ENCODE measurements at regions of chr7 and their contacts with region 1.

Region 1: DNA sequence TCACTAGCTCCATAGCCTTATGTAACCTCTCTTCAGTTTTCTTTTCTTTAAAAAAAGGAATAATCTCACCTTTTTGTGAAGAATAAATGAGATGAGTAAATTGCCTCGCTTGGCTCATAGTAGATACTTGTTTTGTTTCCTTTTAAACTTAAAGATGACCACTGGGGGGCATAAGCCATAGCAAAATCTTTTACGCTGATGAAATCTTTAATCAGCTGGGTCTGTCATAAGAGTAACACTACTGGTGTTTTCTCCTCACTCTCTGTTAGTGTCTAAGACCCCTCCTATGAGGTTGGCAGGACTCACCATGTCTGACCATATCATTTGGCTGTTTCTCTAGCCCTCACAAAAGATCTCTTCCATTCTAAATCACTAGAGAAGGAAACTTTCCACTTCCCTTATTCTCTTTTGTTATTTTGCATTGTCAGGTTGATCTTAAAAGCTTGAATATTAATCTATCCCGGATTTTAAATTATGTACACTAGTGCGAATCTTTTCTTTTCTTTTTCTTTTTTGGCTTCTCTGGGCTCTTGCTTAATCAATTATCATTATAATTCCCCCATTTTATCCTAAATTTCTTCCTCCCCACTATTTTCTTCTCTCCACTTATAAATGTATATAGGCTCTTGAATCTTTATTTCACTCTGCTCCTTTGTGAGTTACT is 12.5 kb downstream of the STAG3 start:
- DNase-seq: peak; percentile 42
- ATAC-seq: peak; percentile 80
- H3K4me3 ChIP-seq: no peak overlapping the region
- H3K27ac ChIP-seq: no peak overlapping the region
- H3K4me1 ChIP-seq: peaks cover 0 to 4% of the 10 kb centered on the region in 2 experiments; a peak in 2 of 4 replicates
- H3K27me3 ChIP-seq: no peaks in the 10 kb centered on the region
- CTCF ChIP-seq: peak; percentile 50 to 81 (median 64); a peak in 5 of 6 replicates
- POLR2A ChIP-seq: no peak
- RAD21 ChIP-seq: peak; percentile 62

Region 2: DNA sequence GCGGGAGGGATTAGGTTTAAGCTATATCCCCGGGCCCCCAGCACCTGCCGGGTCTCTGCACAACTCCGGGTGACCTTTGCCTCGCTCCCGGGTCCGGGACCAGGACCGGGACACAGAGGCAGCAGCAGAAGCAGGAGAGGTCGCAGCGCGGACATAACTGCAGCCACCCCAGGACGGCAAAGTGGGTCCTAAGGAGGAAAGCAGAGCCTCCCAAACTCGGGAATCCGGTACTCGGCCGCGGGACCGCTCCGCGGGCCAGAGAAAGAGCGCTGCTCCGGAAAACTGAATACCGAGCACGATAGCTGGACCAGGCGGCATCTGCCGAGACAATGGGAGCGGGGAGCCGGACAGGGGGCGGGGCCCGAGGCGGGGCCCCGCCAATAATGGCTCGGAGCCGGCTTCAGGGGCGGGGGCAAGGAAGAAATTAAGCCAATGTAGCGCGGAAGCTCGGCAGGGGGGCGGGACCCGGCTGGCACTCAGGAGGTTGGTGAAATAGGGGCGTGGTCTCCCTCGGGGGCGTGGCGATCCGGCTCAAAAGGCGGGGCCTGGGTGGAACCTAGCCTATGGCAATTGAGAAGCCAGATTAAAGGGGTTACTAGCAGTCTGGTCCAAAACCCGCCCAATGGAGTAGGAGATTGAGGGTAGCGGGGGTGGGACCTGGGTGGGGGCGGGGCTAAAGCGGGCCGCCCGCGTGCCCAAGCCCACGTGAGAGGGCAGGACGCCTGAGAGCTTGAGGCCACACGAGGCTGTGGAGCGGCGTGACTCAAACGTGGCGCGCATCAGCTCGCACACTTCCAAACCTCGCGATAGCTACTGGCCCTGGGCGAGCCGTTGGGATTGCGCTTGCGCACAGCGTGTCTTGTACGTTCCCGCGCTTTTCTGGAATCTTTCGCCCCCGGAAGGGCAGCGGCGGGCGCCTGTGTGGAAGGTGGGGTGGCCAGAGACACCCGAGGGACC is 12.9 kb before region 1 on chr7 and contains the starts of genes GPC2 and STAG3:
- CTCF ChIA-PET with region 1: interaction called, 11 read pairs
- POLR2A ChIA-PET with region 1: no interaction called
- RAD21 ChIA-PET with region 1: no interaction called
- intact Hi-C with region 1: no loop called
- DNase-seq: peak; percentile 93
- ATAC-seq: peak; percentile 94
- H3K4me3 ChIP-seq: peak within 1 kb of the TSS; percentile 72 to 85
- H3K27ac ChIP-seq: peak within 1 kb of the TSS; percentile 42; the same call in 1 of the 2 replicates
- H3K4me1 ChIP-seq: peaks cover 3 to 12% of the 10 kb centered on the region in 2 experiments; a peak in 2 of 4 replicates
- H3K27me3 ChIP-seq: no peaks in the 10 kb centered on the region
- CTCF ChIP-seq: no peak
- POLR2A ChIP-seq: peak; percentile 47
- RAD21 ChIP-seq: no peak
- total RNA-seq, gene GPC2: 17.9 TPM
- total RNA-seq, gene STAG3: 1.2 TPM

Region 3: GRCh38 chr7:100407285-100408180 is 217.4 kb after region 1 on chr7:
- CTCF ChIA-PET with region 1: no interaction called
- POLR2A ChIA-PET with region 1: no interaction called
- RAD21 ChIA-PET with region 1: no interaction called
- intact Hi-C with region 1: loop called (anchors 10 kb)
- DNase-seq: peak; percentile 58
- ATAC-seq: peak; percentile 96
- H3K4me3 ChIP-seq: no peak overlapping the region
- H3K27ac ChIP-seq: no peak overlapping the region
- H3K4me1 ChIP-seq: peaks cover 0 to 6% of the 10 kb centered on the region in 2 experiments; a peak in 1 of 4 replicates
- H3K27me3 ChIP-seq: peaks cover 10% of the 10 kb centered on the region; the same call in 1 of the 2 replicates
- CTCF ChIP-seq: peak; percentile 70 to 76 (median 73)
- POLR2A ChIP-seq: no peak
- RAD21 ChIP-seq: peak; percentile 87

Measured in HCT116 (cell line).